PC-3 (cell line): ENCODE measurements at regions of chr7 and their contacts with region 1.

Region 1: GRCh38 chr7:130831817-130832481 is 97.9 kb upstream of the KLF14 start:
- DNase-seq: peak; percentile 56
- ATAC-seq: no peak
- H3K4me3 ChIP-seq: no peak overlapping the region
- H3K27ac ChIP-seq: no peak overlapping the region
- H3K4me1 ChIP-seq: peaks cover 7% of the 10 kb centered on the region
- H3K27me3 ChIP-seq: no peaks in the 10 kb centered on the region
- CTCF ChIP-seq: peak; percentile 84

Region 2: DNA sequence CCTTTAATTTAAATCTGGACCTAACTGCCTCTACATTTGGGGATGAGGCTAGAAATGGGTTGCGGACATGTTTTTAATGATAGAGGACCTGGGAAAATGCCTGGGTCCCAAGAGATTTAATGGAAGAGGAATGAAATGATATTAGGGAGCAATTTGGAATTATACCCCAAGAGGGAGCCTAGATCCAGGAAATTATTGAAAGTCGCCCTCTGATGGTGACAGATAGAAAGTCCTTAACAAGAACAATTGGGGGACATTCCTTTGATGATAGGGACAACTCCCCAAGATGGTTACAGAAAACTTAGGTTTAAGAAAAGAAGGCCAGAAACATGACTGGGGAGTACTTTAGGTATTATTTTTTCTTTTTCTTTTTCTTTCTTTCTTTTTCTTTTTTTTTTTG is 136.1 kb before region 1 on chr7:
- CTCF ChIA-PET with region 1: no interaction called
- POLR2A ChIA-PET with region 1: no interaction called
- intact Hi-C with region 1: loop called (anchors 2 kb)
- DNase-seq: peak; percentile 57
- ATAC-seq: peak; percentile 54
- H3K4me3 ChIP-seq: no peak overlapping the region
- H3K27ac ChIP-seq: no peak overlapping the region
- H3K4me1 ChIP-seq: no peaks in the 10 kb centered on the region
- H3K27me3 ChIP-seq: no peaks in the 10 kb centered on the region
- CTCF ChIP-seq: peak; percentile 78

Region 3: GRCh38 chr7:130758429-130759056 is 73.4 kb before region 1 on chr7:
- CTCF ChIA-PET with region 1: no interaction called
- POLR2A ChIA-PET with region 1: no interaction called
- intact Hi-C with region 1: loop called (anchors 2 kb)
- DNase-seq: peak; percentile 67
- ATAC-seq: peak; percentile 70
- H3K4me3 ChIP-seq: no peak overlapping the region
- H3K27ac ChIP-seq: no peak overlapping the region
- H3K4me1 ChIP-seq: no peaks in the 10 kb centered on the region
- H3K27me3 ChIP-seq: peaks cover under 1% of the 10 kb centered on the region; the same call in 1 of the 2 replicates
- CTCF ChIP-seq: peak; percentile 83

Region 4: GRCh38 chr7:130884437-130885417 is 52.8 kb after region 1 on chr7:
- CTCF ChIA-PET with region 1: no interaction called
- POLR2A ChIA-PET with region 1: no interaction called
- intact Hi-C with region 1: no loop called
- DNase-seq: peak; percentile 27
- ATAC-seq: no peak
- H3K4me3 ChIP-seq: no peak overlapping the region
- H3K27ac ChIP-seq: peak overlapping the region; percentile 80
- H3K4me1 ChIP-seq: peaks cover 50% of the 10 kb centered on the region
- H3K27me3 ChIP-seq: no peaks in the 10 kb centered on the region
- CTCF ChIP-seq: no peak

Region 5: DNA sequence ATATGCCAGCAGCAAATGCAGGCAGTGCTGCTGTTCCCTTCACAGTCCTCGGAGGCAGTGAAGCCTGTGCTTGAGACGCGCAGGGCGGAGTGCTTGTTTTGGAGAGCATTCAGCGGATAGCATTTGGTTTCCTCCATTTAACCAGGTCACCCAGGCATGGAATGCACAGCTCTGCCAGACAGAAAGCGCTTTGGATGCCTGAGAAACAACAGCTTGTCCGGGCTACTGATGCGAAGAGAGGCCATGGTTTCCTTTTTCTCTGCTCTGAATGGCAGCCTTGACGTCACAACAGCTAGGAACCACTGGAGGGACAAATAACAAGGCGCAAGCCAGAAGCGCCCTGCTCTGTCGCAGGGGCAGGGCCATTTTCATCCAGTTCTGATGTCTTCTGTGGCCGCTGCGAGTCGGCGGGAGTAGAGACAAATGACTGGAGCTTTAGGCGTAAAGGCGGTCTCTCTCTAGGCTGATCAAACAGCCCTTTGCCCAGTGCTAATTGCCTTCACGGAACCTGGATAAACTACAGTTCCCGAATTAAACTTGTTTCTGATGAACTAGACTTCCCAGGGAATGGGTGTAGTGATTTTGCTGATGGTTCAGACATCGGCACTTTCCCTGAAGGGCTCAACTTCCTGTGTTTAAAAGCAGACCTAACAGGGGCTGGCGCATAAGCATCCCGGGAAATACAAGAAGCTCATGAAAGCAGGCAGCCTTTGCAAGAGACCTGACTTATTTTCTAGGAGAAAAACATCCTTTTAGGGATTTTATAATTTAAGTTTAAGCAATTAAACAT is 89.6 kb after region 1 on chr7:
- CTCF ChIA-PET with region 1: no interaction called
- POLR2A ChIA-PET with region 1: no interaction called
- intact Hi-C with region 1: no loop called
- DNase-seq: no peak
- ATAC-seq: no peak
- H3K4me3 ChIP-seq: no peak overlapping the region
- H3K27ac ChIP-seq: no peak overlapping the region
- H3K4me1 ChIP-seq: peaks cover 65% of the 10 kb centered on the region
- H3K27me3 ChIP-seq: no peaks in the 10 kb centered on the region
- CTCF ChIP-seq: no peak